GM12878 (cell line): ENCODE measurements at regions of chr5 and their contacts with region 1.

Region 1: DNA sequence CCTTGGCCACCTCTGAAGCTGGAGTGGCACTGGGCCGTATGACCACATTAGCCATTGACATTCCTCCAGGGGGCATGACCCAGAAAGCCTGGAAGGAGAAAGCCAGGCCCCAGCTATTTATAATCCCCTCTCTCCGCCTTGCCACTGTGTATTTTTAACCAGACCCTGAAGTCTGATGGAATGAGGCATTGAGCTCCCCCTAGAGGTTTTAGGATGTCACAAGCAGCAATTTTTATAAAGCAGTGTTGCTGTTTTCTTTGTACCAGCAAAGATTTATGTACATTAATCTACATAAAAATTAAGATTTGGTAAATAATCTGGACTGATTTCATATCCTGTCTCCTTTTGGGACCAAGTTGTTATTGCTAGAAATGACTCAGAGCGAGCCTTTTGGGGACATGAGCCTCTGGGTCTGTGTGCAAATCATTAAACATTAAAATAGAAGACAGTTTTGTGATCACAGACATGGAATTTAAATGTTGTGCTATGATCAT is 127.1 kb downstream of the TRIO start:
- DNase-seq: no peak
- ATAC-seq: peak; percentile 80
- H3K4me3 ChIP-seq: no peak overlapping the region
- H3K27ac ChIP-seq: peak overlapping the region; percentile 19; the same call in 1 of the 2 replicates
- H3K4me1 ChIP-seq: peaks cover 20% of the 10 kb centered on the region
- H3K27me3 ChIP-seq: no peaks in the 10 kb centered on the region
- CTCF ChIP-seq: peak; percentile 77 to 78 (median 78)
- EP300 ChIP-seq: no peak
- POLR2A ChIP-seq: no peak
- RAD21 ChIP-seq: peak; percentile 93

Region 2: GRCh38 chr5:13994621-13995253 is 275.5 kb before region 1 on chr5:
- CTCF ChIA-PET with region 1: interaction called, 17 read pairs
- POLR2A ChIA-PET with region 1: no interaction called
- RAD21 ChIA-PET with region 1: interaction called, 3 read pairs
- SMC1A ChIA-PET with region 1: interaction called, 7 read pairs
- in situ Hi-C with region 1: no loop called
- intact Hi-C with region 1: loop called (anchors 2 kb)
- DNase-seq: no peak
- ATAC-seq: peak; percentile 42; the same call in 2 of the 3 replicates
- H3K4me3 ChIP-seq: no peak overlapping the region
- H3K27ac ChIP-seq: no peak overlapping the region
- H3K4me1 ChIP-seq: no peaks in the 10 kb centered on the region
- H3K27me3 ChIP-seq: peaks cover 0 to 4% of the 10 kb centered on the region in 2 experiments; a peak in 1 of 4 replicates
- CTCF ChIP-seq: no peak
- EP300 ChIP-seq: no peak
- POLR2A ChIP-seq: no peak
- RAD21 ChIP-seq: no peak

Region 3: GRCh38 chr5:14148890-14149671 is 121.2 kb before region 1 on chr5:
- CTCF ChIA-PET with region 1: interaction called, 21 read pairs
- POLR2A ChIA-PET with region 1: interaction called, 7 read pairs
- RAD21 ChIA-PET with region 1: interaction called, 13 read pairs
- SMC1A ChIA-PET with region 1: interaction called, 41 read pairs
- in situ Hi-C with region 1: no loop called
- intact Hi-C with region 1: loop called (anchors 1 kb)
- DNase-seq: no peak
- ATAC-seq: peak; percentile 4
- H3K4me3 ChIP-seq: peak overlapping the region; percentile 52
- H3K27ac ChIP-seq: peak overlapping the region; percentile 66
- H3K4me1 ChIP-seq: peaks cover 57% of the 10 kb centered on the region
- H3K27me3 ChIP-seq: no peaks in the 10 kb centered on the region
- CTCF ChIP-seq: no peak
- EP300 ChIP-seq: peak in 1 of 2 experiments; percentile 28; a peak in 1 of 4 replicates
- POLR2A ChIP-seq: no peak
- RAD21 ChIP-seq: no peak

Region 4: DNA sequence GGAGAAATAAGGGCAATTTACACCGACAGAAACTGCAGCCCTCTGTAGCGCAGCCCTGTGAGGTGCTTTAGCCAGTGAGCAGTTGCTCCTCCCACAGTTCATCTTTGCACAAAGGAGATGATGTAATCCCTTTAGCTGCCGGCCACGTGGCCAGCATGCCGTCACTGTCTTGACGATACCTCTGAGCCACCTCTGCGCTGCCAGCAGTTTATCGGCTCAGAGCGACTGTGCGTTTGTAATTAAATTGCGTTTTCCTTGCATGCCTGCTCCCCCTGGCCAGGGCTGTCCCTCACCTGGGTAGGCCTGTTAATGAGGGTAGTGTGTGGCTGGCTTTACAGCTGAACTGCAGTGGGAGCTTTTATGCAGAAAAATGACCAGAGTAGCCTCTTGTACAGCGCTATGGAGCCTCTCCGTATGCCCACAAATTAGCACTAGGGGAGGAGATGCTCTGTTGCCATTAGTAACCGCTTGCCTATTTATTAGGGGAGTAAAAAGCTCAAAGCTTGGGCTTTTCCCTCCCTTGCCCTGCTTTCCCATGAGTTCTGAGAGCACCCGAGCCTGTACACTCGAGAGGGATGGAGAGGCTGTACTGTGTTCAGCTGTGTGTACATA is 20.1 kb before region 1 on chr5:
- CTCF ChIA-PET with region 1: interaction called, 10 read pairs
- POLR2A ChIA-PET with region 1: interaction called, 3 read pairs
- RAD21 ChIA-PET with region 1: interaction called, 6 read pairs
- SMC1A ChIA-PET with region 1: interaction called, 5 read pairs
- in situ Hi-C with region 1: no loop called
- intact Hi-C with region 1: no loop called
- DNase-seq: no peak
- ATAC-seq: peak; percentile 20
- H3K4me3 ChIP-seq: peak overlapping the region; percentile 34; the same call in 1 of the 2 replicates
- H3K27ac ChIP-seq: peak overlapping the region; percentile 79
- H3K4me1 ChIP-seq: peaks cover 44% of the 10 kb centered on the region
- H3K27me3 ChIP-seq: no peaks in the 10 kb centered on the region
- CTCF ChIP-seq: no peak
- EP300 ChIP-seq: no peak
- POLR2A ChIP-seq: no peak
- RAD21 ChIP-seq: no peak

Region 5: DNA sequence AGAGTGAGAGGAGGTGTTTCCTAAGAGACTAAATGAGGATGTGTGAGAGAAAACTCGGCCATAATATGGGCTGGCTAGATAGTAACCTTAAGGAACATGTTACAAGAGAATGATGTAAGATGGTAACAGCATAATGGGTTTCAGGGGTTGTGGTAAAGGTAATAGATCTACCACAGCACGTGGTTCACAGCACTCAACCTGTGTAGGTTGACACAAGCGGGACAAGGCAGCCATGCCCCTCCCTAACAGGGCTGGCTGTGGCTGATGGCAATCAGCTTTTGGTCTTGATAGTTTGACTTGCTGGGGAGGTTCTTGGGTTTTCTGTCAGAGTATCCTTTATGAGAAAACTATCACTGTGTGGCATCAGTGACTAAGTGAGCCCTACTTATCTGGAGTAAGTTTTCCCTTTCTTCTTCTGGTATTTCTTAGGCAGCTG is 11.5 kb after region 1 on chr5:
- CTCF ChIA-PET with region 1: interaction called, 56 read pairs
- POLR2A ChIA-PET with region 1: interaction called, 7 read pairs
- RAD21 ChIA-PET with region 1: interaction called, 22 read pairs
- SMC1A ChIA-PET with region 1: interaction called, 21 read pairs
- in situ Hi-C with region 1: no loop called
- intact Hi-C with region 1: no loop called
- DNase-seq: no peak
- ATAC-seq: peak; percentile 88
- H3K4me3 ChIP-seq: no peak overlapping the region
- H3K27ac ChIP-seq: no peak overlapping the region
- H3K4me1 ChIP-seq: peaks cover 14% of the 10 kb centered on the region
- H3K27me3 ChIP-seq: no peaks in the 10 kb centered on the region
- CTCF ChIP-seq: no peak
- EP300 ChIP-seq: peak in 1 of 2 experiments; percentile 47; a peak in 1 of 4 replicates
- POLR2A ChIP-seq: no peak
- RAD21 ChIP-seq: no peak

Region 6: GRCh38 chr5:14644623-14645237 is 374.5 kb after region 1 on chr5:
- CTCF ChIA-PET with region 1: interaction called, 8 read pairs
- POLR2A ChIA-PET with region 1: no interaction called
- RAD21 ChIA-PET with region 1: no interaction called
- SMC1A ChIA-PET with region 1: interaction called, 12 read pairs
- in situ Hi-C with region 1: no loop called
- intact Hi-C with region 1: no loop called
- DNase-seq: no peak
- ATAC-seq: no peak
- H3K4me3 ChIP-seq: no peak overlapping the region
- H3K27ac ChIP-seq: no peak overlapping the region
- H3K4me1 ChIP-seq: no peaks in the 10 kb centered on the region
- H3K27me3 ChIP-seq: no peaks in the 10 kb centered on the region
- CTCF ChIP-seq: no peak
- EP300 ChIP-seq: no peak
- POLR2A ChIP-seq: no peak
- RAD21 ChIP-seq: no peak